Psoas muscle (tissue), 8 donors: ENCODE measurements at regions of chr2 and their contacts with region 1.

Region 1: DNA sequence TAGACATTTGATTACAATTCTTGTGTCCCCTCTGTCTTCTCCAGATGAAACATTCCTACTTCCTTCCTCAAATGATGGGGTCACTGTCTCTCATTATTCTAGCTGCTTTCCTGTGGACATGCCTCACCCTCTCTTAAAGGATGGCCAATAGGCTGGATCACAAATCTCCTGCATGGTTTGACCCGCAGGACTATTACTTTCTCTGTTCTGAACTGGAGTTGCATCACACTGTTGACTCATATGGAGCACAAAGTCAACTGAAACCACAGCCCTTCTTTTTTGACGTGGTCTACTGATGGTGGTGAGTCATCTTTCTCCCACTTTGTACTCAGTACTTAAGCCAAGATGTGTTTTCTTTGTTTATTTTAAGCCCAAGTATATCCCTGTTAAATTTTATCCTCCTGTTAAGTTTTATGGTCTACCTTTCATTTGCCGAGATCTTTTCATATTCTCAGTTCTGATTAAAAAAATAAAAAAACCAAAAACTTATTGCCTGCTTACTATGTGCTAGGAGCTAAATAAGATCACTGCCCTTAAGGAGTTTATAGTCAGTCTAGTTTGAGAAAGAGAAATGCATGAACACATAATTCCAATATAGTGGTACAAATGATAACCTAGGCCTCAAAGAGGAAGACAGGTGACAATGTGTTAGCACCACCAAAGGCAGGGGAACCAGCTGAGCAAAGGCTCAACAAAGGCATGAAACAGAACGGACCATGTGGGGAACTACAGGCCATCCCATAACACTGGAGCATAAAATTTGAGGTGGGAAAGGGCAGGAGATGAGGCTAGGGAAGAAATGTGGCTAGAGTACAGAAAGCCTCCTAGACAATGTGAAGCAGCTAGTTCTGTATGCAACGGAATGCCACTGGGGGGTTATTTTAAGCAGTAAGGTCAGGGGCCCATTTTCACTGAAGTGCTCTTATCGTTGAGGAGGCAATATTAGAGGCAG is 67.6 kb upstream of the ZFP36L2 start:
- DNase-seq: no peak
- ATAC-seq: peak; percentile 99
- H3K4me3 ChIP-seq: no peak overlapping the region
- H3K27ac ChIP-seq: peak overlapping the region; percentile 86
- H3K4me1 ChIP-seq: peaks cover 23% of the 10 kb centered on the region
- H3K27me3 ChIP-seq: no peaks in the 10 kb centered on the region
- CTCF ChIP-seq: no peak

Region 2: DNA sequence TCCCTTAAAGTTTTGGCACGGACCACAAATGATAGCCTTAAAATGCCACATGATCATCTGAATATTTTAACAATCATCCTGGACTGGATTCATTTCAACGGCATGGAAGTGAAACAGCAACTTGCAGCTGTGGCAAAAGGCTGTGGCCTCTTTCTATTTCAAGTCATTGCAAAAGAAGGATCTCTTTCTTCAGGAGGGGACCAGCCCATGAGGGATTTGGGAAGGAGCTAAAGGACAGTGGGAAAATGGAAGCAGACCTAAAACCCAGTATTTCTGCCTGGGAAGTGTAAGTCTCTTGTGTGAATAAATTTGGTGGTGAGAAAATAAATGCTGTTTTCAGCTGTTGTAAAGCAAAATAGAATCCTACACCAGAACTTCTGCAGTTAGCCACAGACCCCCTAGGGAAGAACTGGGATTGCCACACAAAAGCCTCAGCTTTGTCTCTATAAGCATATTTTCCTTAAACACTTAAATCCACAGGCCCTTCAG is 39.7 kb after region 1 on chr2:
- intact Hi-C with region 1: loop called (anchors 5 kb)
- DNase-seq: no peak
- ATAC-seq: peak; percentile 72 to 83 (median 78)
- H3K4me3 ChIP-seq: peak overlapping the region; percentile 42
- H3K27ac ChIP-seq: peak overlapping the region; percentile 97
- H3K4me1 ChIP-seq: peaks cover 73% of the 10 kb centered on the region
- H3K27me3 ChIP-seq: no peaks in the 10 kb centered on the region
- CTCF ChIP-seq: no peak